ENCODE measurements at regions of chr19 and their contacts with region 1.

Region 1: GRCh38 chr19:55653758-55654539 is 886 bp upstream of the U2AF2 start:
- DNase-seq: peak; percentile 99 to 100
- H3K4me3 ChIP-seq: peak overlapping the region; percentile 87
- H3K4me3 Mint-ChIP-seq: peak overlapping the region; percentile 98
- H3K27ac Mint-ChIP-seq: peak overlapping the region; percentile 98
- H3K4me1 ChIP-seq: peaks cover 6% of the 10 kb centered on the region; the same call in 1 of the 2 replicates
- H3K4me1 Mint-ChIP-seq: peaks cover 8% of the 10 kb centered on the region
- H3K27me3 ChIP-seq: no peaks in the 10 kb centered on the region
- H3K27me3 Mint-ChIP-seq: no peaks in the 10 kb centered on the region
- CTCF ChIP-seq: peak; percentile 100

Region 2: DNA sequence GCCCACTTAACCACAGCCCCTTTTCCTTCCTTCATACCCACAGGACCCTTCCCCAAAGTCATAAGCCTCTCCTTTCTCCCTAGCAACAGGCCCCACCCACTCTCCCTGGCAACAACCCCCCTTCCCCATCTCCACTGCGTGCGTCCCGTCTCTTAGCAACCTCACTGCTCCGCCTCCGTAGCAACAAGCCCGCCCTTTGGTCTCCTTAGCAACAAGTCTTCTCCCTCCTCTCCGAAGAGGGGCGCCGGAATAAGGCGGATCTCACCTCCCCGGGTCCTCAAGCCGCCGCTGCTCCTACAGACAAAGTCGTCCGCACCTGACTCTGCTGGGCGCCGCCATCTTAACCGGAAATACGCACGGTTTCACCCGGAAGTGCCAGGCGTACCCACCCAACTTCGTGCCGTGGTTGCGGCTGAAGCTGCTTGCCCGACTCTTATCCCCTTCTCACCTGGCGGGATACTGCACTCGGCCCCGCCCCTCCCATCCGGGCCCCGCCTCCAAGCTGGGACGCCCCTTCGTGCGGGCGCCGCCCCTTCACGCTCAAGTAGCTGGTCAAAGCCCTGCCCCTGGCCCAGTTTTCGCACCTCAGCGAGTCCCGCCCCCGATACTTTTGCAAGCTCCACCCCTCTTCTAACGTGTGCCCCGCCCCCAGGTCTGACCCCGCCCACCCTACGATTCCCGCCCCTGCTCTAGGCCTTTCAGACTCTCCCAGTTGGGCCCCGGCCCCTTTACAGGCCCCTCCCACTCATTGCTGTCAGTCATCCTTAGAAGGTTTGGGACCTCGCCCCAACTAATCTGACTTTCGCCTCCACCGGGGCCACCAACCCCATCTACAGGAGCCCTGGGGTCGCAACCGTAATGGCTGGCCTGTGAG is 373.9 kb before region 1 on chr19 and contains the start of gene HSPBP1:
- CTCF ChIA-PET with region 1: no interaction called
- POLR2A ChIA-PET with region 1: interaction called, 10 read pairs
- intact Hi-C with region 1: no loop called
- DNase-seq: peak; percentile 99
- H3K4me3 ChIP-seq: peak within 1 kb of the TSS; percentile 50
- H3K4me3 Mint-ChIP-seq: peak within 1 kb of the TSS; percentile 100
- H3K27ac Mint-ChIP-seq: peak within 1 kb of the TSS; percentile 100
- H3K4me1 ChIP-seq: peaks cover 17% of the 10 kb centered on the region
- H3K4me1 Mint-ChIP-seq: peaks cover 19% of the 10 kb centered on the region
- H3K27me3 ChIP-seq: no peaks in the 10 kb centered on the region
- H3K27me3 Mint-ChIP-seq: no peaks in the 10 kb centered on the region
- CTCF ChIP-seq: no peak
- total RNA-seq, gene HSPBP1: 69.6 and 71.4 TPM in 2 replicates

Region 3: DNA sequence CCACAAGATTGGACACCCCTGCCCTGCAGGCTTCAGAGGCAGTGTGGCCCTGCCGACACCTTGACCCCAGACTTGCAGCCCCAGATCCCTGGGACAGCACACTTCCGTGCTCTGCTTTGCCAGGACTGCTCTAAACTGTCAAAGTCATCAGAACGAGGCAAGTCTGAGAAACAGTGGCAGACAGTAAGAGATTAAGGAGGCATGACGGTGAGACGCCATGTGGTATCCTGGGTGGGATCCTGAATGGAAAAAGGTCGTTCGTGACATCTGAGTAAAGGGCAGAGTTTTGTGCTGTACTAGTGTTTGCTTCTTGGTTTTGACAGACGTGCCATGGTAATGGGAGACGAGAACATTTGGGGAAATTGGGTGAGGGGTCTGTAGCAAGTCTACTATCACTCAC is 87.1 kb before region 1 on chr19:
- CTCF ChIA-PET with region 1: no interaction called
- POLR2A ChIA-PET with region 1: no interaction called
- intact Hi-C with region 1: no loop called
- DNase-seq: no peak
- H3K4me3 ChIP-seq: no peak overlapping the region
- H3K4me3 Mint-ChIP-seq: no peak overlapping the region
- H3K27ac Mint-ChIP-seq: no peak overlapping the region
- H3K4me1 ChIP-seq: 0 out of 2 replicates have a peak, but pooled peaks cover 3% of the 10 kb centered on the region
- H3K4me1 Mint-ChIP-seq: no peaks in the 10 kb centered on the region
- H3K27me3 ChIP-seq: no peaks in the 10 kb centered on the region
- H3K27me3 Mint-ChIP-seq: no peaks in the 10 kb centered on the region
- CTCF ChIP-seq: no peak

Region 4: GRCh38 chr19:55643348-55644176 is 10.4 kb before region 1 on chr19 and contains the start of gene ZNF581:
- CTCF ChIA-PET with region 1: interaction called, 21 read pairs
- POLR2A ChIA-PET with region 1: interaction called, 14 read pairs
- intact Hi-C with region 1: loop called (anchors 2 kb)
- DNase-seq: peak; percentile 87 to 89
- H3K4me3 ChIP-seq: peak within 1 kb of the TSS; percentile 84
- H3K4me3 Mint-ChIP-seq: peak within 1 kb of the TSS; percentile 86
- H3K27ac Mint-ChIP-seq: peak within 1 kb of the TSS; percentile 95
- H3K4me1 ChIP-seq: peaks cover 10% of the 10 kb centered on the region; the same call in 1 of the 2 replicates
- H3K4me1 Mint-ChIP-seq: peaks cover 37% of the 10 kb centered on the region
- H3K27me3 ChIP-seq: no peaks in the 10 kb centered on the region
- H3K27me3 Mint-ChIP-seq: no peaks in the 10 kb centered on the region
- CTCF ChIP-seq: no peak
- total RNA-seq, gene ZNF581: 46.2 and 47.4 TPM in 2 replicates

Region 5: GRCh38 chr19:55674841-55675660 is 21.1 kb after region 1 on chr19 and contains the start of gene EPN1:
- CTCF ChIA-PET with region 1: interaction called, 53 read pairs
- POLR2A ChIA-PET with region 1: interaction called, 14 read pairs
- intact Hi-C with region 1: loop called (anchors 2 kb)
- DNase-seq: peak; percentile 98
- H3K4me3 ChIP-seq: peak within 1 kb of the TSS; percentile 76
- H3K4me3 Mint-ChIP-seq: peak within 1 kb of the TSS; percentile 94
- H3K27ac Mint-ChIP-seq: peak within 1 kb of the TSS; percentile 92
- H3K4me1 ChIP-seq: peaks cover 30% of the 10 kb centered on the region
- H3K4me1 Mint-ChIP-seq: peaks cover 47% of the 10 kb centered on the region
- H3K27me3 ChIP-seq: no peaks in the 10 kb centered on the region
- H3K27me3 Mint-ChIP-seq: no peaks in the 10 kb centered on the region
- CTCF ChIP-seq: no peak
- total RNA-seq, gene EPN1: 197 and 201 TPM in 2 replicates

Region 6: GRCh38 chr19:55939206-55939605 is 285.3 kb after region 1 on chr19:
- CTCF ChIA-PET with region 1: no interaction called
- POLR2A ChIA-PET with region 1: no interaction called
- intact Hi-C with region 1: no loop called
- DNase-seq: no peak
- H3K4me3 ChIP-seq: no peak overlapping the region
- H3K4me3 Mint-ChIP-seq: no peak overlapping the region
- H3K27ac Mint-ChIP-seq: no peak overlapping the region
- H3K4me1 ChIP-seq: no peaks in the 10 kb centered on the region
- H3K4me1 Mint-ChIP-seq: no peaks in the 10 kb centered on the region
- H3K27me3 ChIP-seq: no peaks in the 10 kb centered on the region
- H3K27me3 Mint-ChIP-seq: peaks cover 5% of the 10 kb centered on the region
- CTCF ChIP-seq: no peak

Region 7: GRCh38 chr19:56140583-56141416 is 486.9 kb after region 1 on chr19 and contains the start of gene ZNF444:
- CTCF ChIA-PET with region 1: no interaction called
- POLR2A ChIA-PET with region 1: no interaction called
- intact Hi-C with region 1: loop called (anchors 10 kb)
- DNase-seq: peak; percentile 99 to 100
- H3K4me3 ChIP-seq: peak within 1 kb of the TSS; percentile 70
- H3K4me3 Mint-ChIP-seq: peak within 1 kb of the TSS; percentile 87
- H3K27ac Mint-ChIP-seq: peak within 1 kb of the TSS; percentile 97
- H3K4me1 ChIP-seq: peaks cover 21% of the 10 kb centered on the region
- H3K4me1 Mint-ChIP-seq: peaks cover 36% of the 10 kb centered on the region
- H3K27me3 ChIP-seq: no peaks in the 10 kb centered on the region
- H3K27me3 Mint-ChIP-seq: no peaks in the 10 kb centered on the region
- CTCF ChIP-seq: no peak
- total RNA-seq, gene ZNF444: 92.2 and 95.6 TPM in 2 replicates

Measured in Caco-2 (cell line).